Activated CD4-positive, alpha-beta memory T cell treated with anti-CD3 and anti-CD28 coated beads, Interleukin-2, amount 10 ng/mL, durations not matched to agents 7 days and 5 days (primary cell): ENCODE measurements at regions of chr1 and their contacts with region 1.

Region 1: DNA sequence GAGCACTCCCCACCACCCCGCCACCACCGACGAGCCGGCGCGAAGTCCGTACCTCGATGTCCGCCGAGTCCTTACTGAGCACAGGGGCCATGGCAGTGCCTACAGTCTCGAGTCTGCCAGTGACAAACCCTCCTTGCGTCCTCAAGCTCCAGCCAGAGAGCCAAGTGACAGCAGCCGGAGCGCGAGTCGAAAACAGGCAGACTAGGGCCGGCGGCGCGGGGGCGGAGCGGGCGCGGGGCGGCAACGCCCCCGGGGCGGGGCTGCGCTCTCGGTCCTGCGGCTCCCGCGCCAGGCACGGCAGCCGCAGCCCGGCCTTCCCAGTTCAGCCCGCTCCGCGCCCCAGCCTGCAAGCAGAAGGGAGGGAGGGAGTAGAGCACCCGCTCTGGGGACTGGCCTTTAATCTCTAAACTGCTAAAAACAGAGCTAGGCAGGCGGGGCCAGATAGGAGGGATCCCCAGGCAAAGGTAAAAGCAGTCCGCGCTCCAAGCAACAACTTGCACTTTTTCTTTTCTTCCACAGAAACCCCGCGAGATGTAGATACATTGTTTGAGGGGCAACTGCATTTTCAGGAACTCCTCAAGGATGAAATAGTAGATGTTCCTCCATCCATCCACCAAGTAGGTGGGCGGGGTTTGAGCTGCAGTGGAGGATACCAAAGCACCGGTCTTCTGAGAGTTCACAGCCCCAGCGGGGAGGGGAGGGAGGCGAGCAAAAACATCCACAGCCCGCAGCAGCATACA is at the start of gene DPYD:
- DNase-seq: peak; percentile 89
- H3K4me3 Mint-ChIP-seq: peak within 1 kb of the TSS; percentile 86
- H3K27ac Mint-ChIP-seq: peak within 1 kb of the TSS; percentile 97
- H3K4me1 Mint-ChIP-seq: peaks cover 58% of the 10 kb centered on the region
- H3K27me3 Mint-ChIP-seq: no peaks in the 10 kb centered on the region
- total RNA-seq, gene DPYD: 42.1 to 44.6 TPM

Region 2: DNA sequence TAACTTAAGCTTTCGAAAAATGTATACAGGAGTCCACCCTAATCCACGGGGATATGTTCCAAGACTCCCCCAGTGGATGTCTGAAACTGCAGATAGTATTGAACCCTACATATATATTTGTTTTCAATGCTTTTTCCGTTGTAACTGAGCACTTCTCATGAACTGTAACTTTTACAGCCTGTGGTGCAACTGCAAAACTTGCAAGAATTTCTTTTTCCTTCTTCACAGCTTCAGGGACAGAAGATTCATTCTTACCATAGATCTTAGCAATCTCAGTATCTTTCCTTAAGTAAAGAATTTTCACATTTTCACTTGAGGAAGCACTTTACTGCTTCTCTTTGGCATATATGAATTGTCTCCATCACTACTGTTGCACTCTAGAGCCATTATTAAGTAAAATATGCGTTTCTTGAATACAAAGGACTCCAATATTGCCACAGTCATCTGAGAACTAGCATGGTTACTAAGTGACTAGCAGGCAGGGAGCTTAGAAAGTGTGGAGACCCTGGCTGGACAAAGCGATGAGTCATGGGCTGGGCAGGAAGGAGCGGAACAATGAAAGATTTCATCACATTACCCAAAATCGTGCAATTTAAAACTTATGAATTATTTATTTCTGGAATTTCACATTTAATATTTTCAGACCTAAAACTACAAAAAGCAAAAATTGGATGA is 14.3 kb before region 1 on chr1:
- CTCF ChIA-PET with region 1: no interaction called
- POLR2A ChIA-PET with region 1: interaction called, 11 read pairs
- DNase-seq: no peak
- H3K4me3 Mint-ChIP-seq: no peak overlapping the region
- H3K27ac Mint-ChIP-seq: no peak overlapping the region
- H3K4me1 Mint-ChIP-seq: peaks cover 18% of the 10 kb centered on the region
- H3K27me3 Mint-ChIP-seq: no peaks in the 10 kb centered on the region

Region 3: DNA sequence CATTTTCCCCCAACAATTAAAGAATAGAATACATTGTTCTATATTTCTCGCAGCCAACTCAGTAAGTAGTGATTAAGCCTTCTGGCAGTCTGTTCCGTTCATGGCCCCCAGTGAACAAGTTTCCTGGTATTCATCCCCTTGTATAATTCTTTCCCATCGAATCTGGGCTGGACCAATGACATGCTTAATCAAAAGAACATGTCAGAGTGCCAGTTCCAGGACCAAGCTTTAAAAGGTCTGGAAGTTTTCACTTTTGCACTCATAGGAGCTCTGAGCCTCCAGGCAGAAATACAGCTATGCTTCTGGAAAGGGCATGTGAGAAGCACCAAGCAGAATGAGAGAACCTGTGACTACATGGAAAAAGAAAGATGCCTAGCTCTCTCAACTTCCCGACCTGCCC is 22.4 kb after region 1 on chr1:
- CTCF ChIA-PET with region 1: interaction called, 5 read pairs
- POLR2A ChIA-PET with region 1: interaction called, 44 read pairs
- DNase-seq: no peak
- H3K4me3 Mint-ChIP-seq: no peak overlapping the region
- H3K27ac Mint-ChIP-seq: no peak overlapping the region
- H3K4me1 Mint-ChIP-seq: peaks cover 37% of the 10 kb centered on the region
- H3K27me3 Mint-ChIP-seq: peaks cover 2% of the 10 kb centered on the region

Region 4: GRCh38 chr1:98048244-98048643 is 127.2 kb after region 1 on chr1:
- CTCF ChIA-PET with region 1: interaction called, 5 read pairs
- POLR2A ChIA-PET with region 1: interaction called, 24 read pairs
- DNase-seq: peak; percentile 78
- H3K4me3 Mint-ChIP-seq: peak overlapping the region; percentile 9
- H3K27ac Mint-ChIP-seq: no peak overlapping the region
- H3K4me1 Mint-ChIP-seq: peaks cover 42% of the 10 kb centered on the region
- H3K27me3 Mint-ChIP-seq: peaks cover 73% of the 10 kb centered on the region